CD8-positive, alpha-beta T cell (primary cell): ENCODE measurements at regions of chr10 and their contacts with region 1.

Region 1: GRCh38 chr10:93515071-93516005 is 18.9 kb downstream of the CEP55 start:
- DNase-seq: no peak
- ATAC-seq: no peak
- H3K4me3 ChIP-seq: no peak overlapping the region
- H3K4me3 Mint-ChIP-seq: no peak overlapping the region
- H3K27ac ChIP-seq: no peak overlapping the region
- H3K27ac Mint-ChIP-seq: no peak overlapping the region
- H3K4me1 ChIP-seq: no peaks in the 10 kb centered on the region
- H3K4me1 Mint-ChIP-seq: no peaks in the 10 kb centered on the region
- H3K27me3 ChIP-seq: no peaks in the 10 kb centered on the region
- H3K27me3 Mint-ChIP-seq: peaks cover 2% of the 10 kb centered on the region
- CTCF ChIP-seq: no peak

Region 2: GRCh38 chr10:92880233-92880861 is 635.0 kb before region 1 on chr10:
- CTCF ChIA-PET with region 1: no interaction called
- POLR2A ChIA-PET with region 1: no interaction called
- intact Hi-C with region 1: loop called in 1 of 2 experiments (anchors 10 kb)
- DNase-seq: peak in 3 of 9 experiments; percentile 5 to 56 (median 45)
- ATAC-seq: no peak
- H3K4me3 ChIP-seq: no peak overlapping the region
- H3K4me3 Mint-ChIP-seq: no peak overlapping the region
- H3K27ac ChIP-seq: no peak overlapping the region
- H3K27ac Mint-ChIP-seq: no peak overlapping the region
- H3K4me1 ChIP-seq: peaks cover 12% of the 10 kb centered on the region
- H3K4me1 Mint-ChIP-seq: peaks cover 23% of the 10 kb centered on the region
- H3K27me3 ChIP-seq: no peaks in the 10 kb centered on the region
- H3K27me3 Mint-ChIP-seq: no peaks in the 10 kb centered on the region
- CTCF ChIP-seq: peak; percentile 52

Region 3: DNA sequence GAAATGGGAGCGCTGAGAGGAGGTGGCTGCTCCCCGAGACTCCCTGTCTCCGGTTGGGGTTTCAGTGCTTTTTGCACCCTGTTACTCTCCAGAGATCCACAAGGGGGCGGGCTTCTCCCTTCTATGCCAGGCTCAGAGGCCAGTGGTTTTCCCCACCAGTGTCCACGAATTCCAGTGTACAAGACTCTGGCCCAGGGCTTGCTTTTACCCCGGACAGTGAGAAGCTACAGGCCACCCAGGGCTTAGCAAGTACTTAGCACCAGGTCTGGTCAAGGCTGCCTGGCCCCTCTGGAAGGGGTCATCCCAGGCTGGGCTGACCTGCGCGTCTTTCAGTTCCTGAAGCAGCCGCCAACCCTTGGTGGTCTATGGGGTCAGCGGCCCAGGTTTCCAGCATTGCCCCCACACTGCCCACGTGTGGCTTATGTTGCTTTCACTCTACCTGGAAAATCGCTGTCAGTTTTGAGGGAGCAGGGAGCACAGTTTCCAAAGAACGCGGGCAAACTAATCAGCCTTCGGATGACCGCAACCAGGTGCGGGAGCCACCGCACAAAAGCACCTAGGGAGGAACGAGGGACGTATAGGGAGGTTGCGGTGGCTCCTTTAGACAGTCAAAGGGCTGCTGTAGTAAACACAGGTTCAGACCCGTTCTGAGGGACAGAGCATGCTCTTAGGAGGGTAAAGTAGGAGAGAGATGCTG is 434.8 kb before region 1 on chr10:
- CTCF ChIA-PET with region 1: no interaction called
- POLR2A ChIA-PET with region 1: no interaction called
- intact Hi-C with region 1: loop called in 1 of 2 experiments (anchors 10 kb)
- DNase-seq: peak in 8 of 9 experiments; percentile 23 to 63 (median 50)
- ATAC-seq: no peak
- H3K4me3 ChIP-seq: no peak overlapping the region
- H3K4me3 Mint-ChIP-seq: no peak overlapping the region
- H3K27ac ChIP-seq: no peak overlapping the region
- H3K27ac Mint-ChIP-seq: no peak overlapping the region
- H3K4me1 ChIP-seq: no peaks in the 10 kb centered on the region
- H3K4me1 Mint-ChIP-seq: peaks cover 5% of the 10 kb centered on the region
- H3K27me3 ChIP-seq: peaks cover 0 to 4% of the 10 kb centered on the region in 2 experiments
- H3K27me3 Mint-ChIP-seq: peaks cover 42% of the 10 kb centered on the region
- CTCF ChIP-seq: peak; percentile 59

Region 4: DNA sequence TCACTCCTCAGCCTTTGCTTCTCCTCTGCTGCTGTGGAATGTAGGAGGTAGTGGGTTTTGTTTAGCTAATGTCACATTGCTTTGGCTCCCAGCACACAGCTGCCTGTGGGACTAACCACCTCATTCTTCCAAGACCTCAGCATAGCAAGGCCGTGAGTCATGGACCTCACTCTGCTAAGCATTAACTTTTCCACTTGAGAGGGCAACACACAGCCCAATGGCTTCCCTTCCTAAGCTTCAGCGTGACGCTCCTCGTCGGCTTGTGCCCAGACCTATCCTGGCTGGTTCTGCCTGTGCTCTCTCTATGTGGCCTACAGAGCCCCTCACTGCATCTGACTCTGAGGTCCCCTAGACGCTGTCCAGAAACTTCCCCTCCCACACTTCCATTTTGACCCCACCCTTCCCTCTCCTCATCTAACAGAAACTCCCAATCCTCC is 56.5 kb before region 1 on chr10:
- CTCF ChIA-PET with region 1: no interaction called
- POLR2A ChIA-PET with region 1: no interaction called
- intact Hi-C with region 1: no loop called
- DNase-seq: no peak
- ATAC-seq: no peak
- H3K4me3 ChIP-seq: no peak overlapping the region
- H3K4me3 Mint-ChIP-seq: no peak overlapping the region
- H3K27ac ChIP-seq: no peak overlapping the region
- H3K27ac Mint-ChIP-seq: no peak overlapping the region
- H3K4me1 ChIP-seq: no peaks in the 10 kb centered on the region
- H3K4me1 Mint-ChIP-seq: peaks cover 4% of the 10 kb centered on the region
- H3K27me3 ChIP-seq: no peaks in the 10 kb centered on the region
- H3K27me3 Mint-ChIP-seq: peaks cover 4% of the 10 kb centered on the region
- CTCF ChIP-seq: no peak

Region 5: DNA sequence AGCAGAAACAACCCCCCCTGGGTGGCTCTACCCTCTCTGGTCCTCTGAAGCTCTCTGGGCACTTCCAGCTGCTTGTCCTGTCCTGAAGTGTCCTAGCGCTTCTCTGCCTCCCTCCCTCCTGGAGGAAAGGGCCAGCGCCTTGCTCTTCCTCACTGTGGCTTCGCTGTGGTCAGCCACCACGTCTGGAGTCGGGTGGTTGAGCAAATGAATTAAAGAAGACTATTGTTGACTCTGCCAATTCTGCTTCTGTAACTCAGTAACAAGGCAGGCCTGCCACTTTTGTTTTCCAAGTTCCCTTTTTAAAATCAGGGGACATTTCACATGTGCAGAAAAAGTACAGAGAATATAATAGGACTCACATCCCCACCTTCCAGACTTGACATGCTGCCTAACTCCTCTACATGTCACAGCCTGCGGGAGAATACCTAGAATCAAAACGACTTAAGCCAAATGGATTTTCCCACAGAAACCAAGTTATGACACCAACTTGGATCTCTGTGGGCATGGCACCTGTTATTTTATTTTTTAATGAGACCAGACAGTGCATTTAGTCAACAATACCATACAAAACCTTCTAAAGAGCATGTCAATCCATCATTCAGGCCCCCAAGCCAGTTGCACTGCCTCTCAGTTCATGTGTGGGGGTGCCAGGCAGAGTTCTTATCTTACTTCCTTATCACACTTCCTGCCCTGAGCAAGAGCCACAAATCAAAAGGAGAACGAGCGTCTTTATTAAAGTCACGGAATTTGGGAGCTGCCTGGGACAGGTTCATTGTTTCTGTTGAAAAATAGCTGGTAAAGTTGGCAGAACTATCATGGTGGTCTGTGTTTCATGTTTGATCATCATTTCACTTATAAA is 57.9 kb after region 1 on chr10:
- CTCF ChIA-PET with region 1: no interaction called
- POLR2A ChIA-PET with region 1: no interaction called
- intact Hi-C with region 1: no loop called
- DNase-seq: no peak
- ATAC-seq: no peak
- H3K4me3 ChIP-seq: no peak overlapping the region
- H3K4me3 Mint-ChIP-seq: no peak overlapping the region
- H3K27ac ChIP-seq: no peak overlapping the region
- H3K27ac Mint-ChIP-seq: no peak overlapping the region
- H3K4me1 ChIP-seq: peaks cover 3% of the 10 kb centered on the region
- H3K4me1 Mint-ChIP-seq: peaks cover 6% of the 10 kb centered on the region
- H3K27me3 ChIP-seq: peaks cover 0 to 6% of the 10 kb centered on the region in 2 experiments
- H3K27me3 Mint-ChIP-seq: peaks cover 36% of the 10 kb centered on the region
- CTCF ChIP-seq: no peak

Region 6: DNA sequence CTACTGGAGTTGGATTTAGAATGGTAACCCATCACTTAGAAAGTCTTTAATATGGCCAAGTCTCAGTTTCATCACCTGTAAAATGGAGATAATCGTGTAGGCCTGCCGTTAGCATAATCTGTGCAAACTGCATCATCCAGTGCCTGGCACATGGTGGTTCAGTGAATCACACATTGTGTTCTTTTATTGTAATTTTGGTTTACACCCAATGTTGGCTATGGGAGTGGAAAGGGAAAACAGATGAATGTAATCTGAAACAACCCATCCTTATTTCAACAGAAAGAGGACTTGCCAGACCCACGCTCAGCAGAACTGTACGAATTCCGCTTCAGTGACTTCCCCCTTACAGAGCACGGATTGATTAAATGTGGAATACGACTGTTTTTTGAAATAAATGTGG is 124.5 kb after region 1 on chr10:
- CTCF ChIA-PET with region 1: no interaction called
- POLR2A ChIA-PET with region 1: no interaction called
- intact Hi-C with region 1: no loop called
- DNase-seq: no peak
- ATAC-seq: no peak
- H3K4me3 ChIP-seq: no peak overlapping the region
- H3K4me3 Mint-ChIP-seq: no peak overlapping the region
- H3K27ac ChIP-seq: no peak overlapping the region
- H3K27ac Mint-ChIP-seq: no peak overlapping the region
- H3K4me1 ChIP-seq: no peaks in the 10 kb centered on the region
- H3K4me1 Mint-ChIP-seq: no peaks in the 10 kb centered on the region
- H3K27me3 ChIP-seq: peaks cover 0 to 2% of the 10 kb centered on the region in 2 experiments
- H3K27me3 Mint-ChIP-seq: peaks cover 4% of the 10 kb centered on the region
- CTCF ChIP-seq: no peak